Activated CD4-positive, alpha-beta T cell treated with anti-CD3 and anti-CD28 coated beads for 36 hours (primary cell): ENCODE measurements at regions of chr19 and their contacts with region 1.

Region 1: DNA sequence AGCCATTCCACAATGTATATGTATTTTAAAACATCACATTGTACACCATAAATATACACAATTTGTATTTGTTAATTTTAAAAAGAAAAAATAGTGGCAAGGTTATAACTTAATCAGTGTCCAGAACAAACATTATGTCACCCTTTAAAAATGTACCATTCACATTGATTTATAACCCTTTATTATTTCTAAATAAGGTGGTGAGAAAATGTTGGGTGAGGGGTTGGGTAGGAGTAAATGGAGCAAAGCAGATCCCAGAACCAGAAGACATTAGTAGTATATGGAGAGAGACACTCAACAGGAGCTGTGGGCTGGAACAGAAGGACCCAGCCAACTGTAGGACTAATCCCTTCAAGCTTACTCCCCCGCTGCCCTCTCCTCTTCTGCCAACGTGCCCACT is 4.1 kb downstream of the IGSF23 start:
- DNase-seq: no peak
- ATAC-seq: no peak
- H3K4me3 Mint-ChIP-seq: no peak overlapping the region
- H3K27ac Mint-ChIP-seq: no peak overlapping the region
- H3K4me1 Mint-ChIP-seq: no peaks in the 10 kb centered on the region
- H3K27me3 Mint-ChIP-seq: no peaks in the 10 kb centered on the region

Region 2: DNA sequence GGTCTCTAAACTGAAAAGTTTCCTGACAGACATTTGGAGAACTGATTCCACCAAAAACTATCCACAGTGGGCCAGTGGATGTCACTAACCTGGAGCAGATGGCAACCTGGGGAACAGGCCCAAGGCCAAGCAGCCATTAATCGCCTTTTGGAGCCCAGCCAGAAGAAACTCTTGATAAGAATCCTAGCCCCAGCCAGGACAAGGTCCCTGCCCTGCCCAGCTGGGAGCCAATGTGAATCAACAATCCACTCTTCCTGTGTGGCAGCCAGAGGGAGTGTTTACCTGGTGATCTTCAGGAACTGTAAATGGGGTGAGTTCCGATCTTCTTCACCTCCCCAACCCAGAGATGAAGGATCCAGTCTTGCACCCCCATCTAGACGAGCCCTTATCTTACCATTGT is 18.6 kb before region 1 on chr19:
- CTCF ChIA-PET with region 1: interaction called, 3 read pairs
- POLR2A ChIA-PET with region 1: no interaction called
- intact Hi-C with region 1: loop called in 1 of 2 experiments (anchors 1 kb)
- DNase-seq: no peak
- ATAC-seq: no peak
- H3K4me3 Mint-ChIP-seq: no peak overlapping the region
- H3K27ac Mint-ChIP-seq: no peak overlapping the region
- H3K4me1 Mint-ChIP-seq: no peaks in the 10 kb centered on the region
- H3K27me3 Mint-ChIP-seq: peaks cover 17% of the 10 kb centered on the region

Region 3: GRCh38 chr19:44662691-44663385 is 45.4 kb after region 1 on chr19:
- CTCF ChIA-PET with region 1: no interaction called
- POLR2A ChIA-PET with region 1: no interaction called
- intact Hi-C with region 1: no loop called
- DNase-seq: no peak
- ATAC-seq: no peak
- H3K4me3 Mint-ChIP-seq: no peak overlapping the region
- H3K27ac Mint-ChIP-seq: no peak overlapping the region
- H3K4me1 Mint-ChIP-seq: no peaks in the 10 kb centered on the region
- H3K27me3 Mint-ChIP-seq: no peaks in the 10 kb centered on the region